HepG2 (cell line): ENCODE measurements at regions of chr6 and their contacts with region 1.

Region 1: DNA sequence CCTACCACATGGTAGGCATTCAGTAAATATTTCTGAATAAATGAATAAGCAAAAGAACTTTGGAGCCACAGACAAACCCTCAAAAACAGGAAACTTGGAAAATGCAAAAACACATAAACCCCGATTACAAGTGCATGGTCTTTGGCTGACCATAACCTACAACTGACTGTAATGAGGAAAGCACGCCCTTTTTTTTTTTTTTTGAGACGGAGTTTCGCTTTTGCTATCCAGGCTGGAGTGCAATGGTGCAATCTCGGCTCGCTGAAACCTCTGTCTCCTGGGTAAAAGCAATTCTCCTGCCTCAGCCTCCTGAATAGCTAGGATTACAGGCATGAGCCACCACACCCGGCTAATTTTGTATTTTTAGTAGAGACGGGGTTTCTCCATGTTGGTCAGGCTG is 11.9 kb upstream of the LATS1 start:
- DNase-seq: no peak
- ATAC-seq: no peak
- H3K4me3 ChIP-seq: no peak overlapping the region
- H3K27ac ChIP-seq: no peak overlapping the region
- H3K4me1 ChIP-seq: no peaks in the 10 kb centered on the region
- H3K27me3 ChIP-seq: no peaks in the 10 kb centered on the region
- CTCF ChIP-seq: no peak
- EP300 ChIP-seq: no peak
- POLR2A ChIP-seq: no peak
- RAD21 ChIP-seq: no peak

Region 2: DNA sequence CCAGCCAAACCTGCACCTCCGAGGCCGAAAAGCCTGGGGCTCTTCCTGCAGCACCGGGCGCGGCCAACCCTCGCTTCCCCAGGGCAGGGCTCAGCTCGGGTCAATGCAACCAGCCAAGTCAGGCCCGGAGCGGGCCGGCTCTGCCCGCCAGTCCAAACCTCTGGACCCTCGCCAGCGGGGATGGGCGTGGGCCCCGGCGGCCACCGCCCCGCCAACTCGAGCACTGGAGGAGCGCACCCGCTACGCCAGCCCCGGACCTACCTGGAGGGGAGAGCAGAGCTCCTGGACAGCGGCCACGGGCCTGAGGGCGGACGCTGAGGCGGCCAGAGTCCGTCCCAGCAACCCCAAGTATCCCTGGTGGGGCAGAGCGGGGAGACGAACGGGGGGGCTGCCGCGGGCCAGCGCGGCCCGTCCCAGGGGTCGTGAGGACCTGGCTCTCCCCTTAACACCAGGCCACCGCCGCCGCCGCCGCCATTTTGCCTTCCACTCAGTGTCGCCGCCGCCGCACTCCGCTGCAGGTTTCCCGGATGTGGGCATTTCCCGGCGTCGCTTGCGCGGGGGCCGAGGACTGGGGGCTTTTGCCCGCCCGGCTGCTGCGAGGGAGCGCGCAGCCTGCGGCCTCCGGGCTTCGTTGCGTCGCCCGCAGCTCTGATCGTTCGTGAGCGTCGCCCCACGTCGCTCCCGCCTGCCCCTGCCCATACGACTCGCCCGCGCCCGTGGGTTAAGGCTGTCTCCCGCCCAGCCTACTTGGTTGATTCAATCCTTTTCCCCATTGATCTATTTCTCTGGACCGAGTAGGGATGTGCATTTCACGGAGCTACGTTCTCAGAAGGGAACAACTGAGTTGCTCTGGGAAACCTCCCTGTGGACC is 12.0 kb before region 1 on chr6 and contains the start of gene LATS1:
- CTCF ChIA-PET with region 1: no interaction called
- POLR2A ChIA-PET with region 1: interaction called, 11 read pairs
- in situ Hi-C with region 1: no loop called
- intact Hi-C with region 1: no loop called
- DNase-seq: peak; percentile 81
- ATAC-seq: peak; percentile 94
- H3K4me3 ChIP-seq: peak within 1 kb of the TSS; percentile 79 to 97 (median 96)
- H3K27ac ChIP-seq: peak within 1 kb of the TSS; percentile 97
- H3K4me1 ChIP-seq: peaks cover 23% of the 10 kb centered on the region
- H3K27me3 ChIP-seq: no peaks in the 10 kb centered on the region; a peak in 1 of 5 replicates
- CTCF ChIP-seq: peak; percentile 29; the same call in 1 of the 2 replicates
- EP300 ChIP-seq: peak in 1 of 2 experiments; percentile 51; a peak in 1 of 4 replicates
- POLR2A ChIP-seq: peak; percentile 95 to 99
- RAD21 ChIP-seq: peak; percentile 63
- total RNA-seq, gene LATS1: 12.6 and 16.4 TPM in 2 replicates